ENCODE measurements at regions of chr13 and their contacts with region 1.

Region 1: DNA sequence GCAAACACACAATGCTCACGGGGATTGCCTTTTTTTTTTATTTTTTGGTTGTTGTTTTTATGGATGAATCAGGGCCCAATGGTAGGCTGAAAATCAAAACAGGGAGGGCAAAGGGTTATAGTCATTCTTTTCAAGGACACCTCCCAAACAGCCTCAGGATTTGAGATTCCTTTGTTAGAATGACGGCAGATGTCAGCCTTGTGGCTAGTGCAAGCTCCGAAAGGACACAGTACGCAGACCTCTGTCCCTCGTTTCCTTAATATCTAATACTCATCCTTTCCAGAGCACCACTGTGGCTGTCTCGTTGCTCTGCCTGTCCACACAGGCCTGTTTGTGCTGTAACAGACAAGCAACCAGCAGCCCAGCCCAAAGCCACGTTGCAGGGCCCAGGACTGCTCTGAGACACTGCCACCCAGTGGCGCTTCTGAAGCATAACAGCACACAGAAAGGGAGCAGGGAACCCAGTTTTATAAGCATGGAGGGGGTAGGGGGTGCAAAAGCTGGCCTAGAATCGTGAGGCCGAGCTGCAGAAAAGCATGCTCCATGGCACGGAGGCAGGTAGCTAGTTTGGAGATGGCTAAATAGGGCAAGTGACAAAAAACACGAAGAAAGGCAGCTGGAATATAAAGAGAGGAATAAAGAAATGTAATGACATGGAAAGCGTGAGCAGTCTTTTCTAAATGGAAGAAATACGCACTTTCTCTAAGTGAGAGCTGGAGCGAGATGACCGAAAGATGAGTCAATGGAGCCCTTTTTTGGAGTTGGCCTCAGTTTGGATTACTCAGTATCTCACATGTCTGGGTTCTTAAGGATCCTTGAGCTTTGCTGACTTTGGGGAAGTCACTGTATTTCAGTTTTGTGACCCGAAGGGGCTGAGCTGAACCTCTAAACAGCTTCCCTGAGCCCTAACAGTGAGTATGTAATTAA is 40.7 kb upstream of the MEDAG start:
- DNase-seq: peak; percentile 53 to 64 (median 62)
- ATAC-seq: peak; percentile 91
- H3K4me3 ChIP-seq: no peak overlapping the region
- H3K27ac ChIP-seq: no peak overlapping the region
- H3K4me1 ChIP-seq: no peaks in the 10 kb centered on the region; a peak in 1 of 5 replicates
- H3K27me3 ChIP-seq: peaks cover 2 to 11% of the 10 kb centered on the region in 2 experiments; a peak in 3 of 5 replicates
- CTCF ChIP-seq: peak; percentile 70 to 82 (median 74)
- EP300 ChIP-seq: no peak
- POLR2A ChIP-seq: no peak
- RAD21 ChIP-seq: peak; percentile 57 to 72

Region 2: DNA sequence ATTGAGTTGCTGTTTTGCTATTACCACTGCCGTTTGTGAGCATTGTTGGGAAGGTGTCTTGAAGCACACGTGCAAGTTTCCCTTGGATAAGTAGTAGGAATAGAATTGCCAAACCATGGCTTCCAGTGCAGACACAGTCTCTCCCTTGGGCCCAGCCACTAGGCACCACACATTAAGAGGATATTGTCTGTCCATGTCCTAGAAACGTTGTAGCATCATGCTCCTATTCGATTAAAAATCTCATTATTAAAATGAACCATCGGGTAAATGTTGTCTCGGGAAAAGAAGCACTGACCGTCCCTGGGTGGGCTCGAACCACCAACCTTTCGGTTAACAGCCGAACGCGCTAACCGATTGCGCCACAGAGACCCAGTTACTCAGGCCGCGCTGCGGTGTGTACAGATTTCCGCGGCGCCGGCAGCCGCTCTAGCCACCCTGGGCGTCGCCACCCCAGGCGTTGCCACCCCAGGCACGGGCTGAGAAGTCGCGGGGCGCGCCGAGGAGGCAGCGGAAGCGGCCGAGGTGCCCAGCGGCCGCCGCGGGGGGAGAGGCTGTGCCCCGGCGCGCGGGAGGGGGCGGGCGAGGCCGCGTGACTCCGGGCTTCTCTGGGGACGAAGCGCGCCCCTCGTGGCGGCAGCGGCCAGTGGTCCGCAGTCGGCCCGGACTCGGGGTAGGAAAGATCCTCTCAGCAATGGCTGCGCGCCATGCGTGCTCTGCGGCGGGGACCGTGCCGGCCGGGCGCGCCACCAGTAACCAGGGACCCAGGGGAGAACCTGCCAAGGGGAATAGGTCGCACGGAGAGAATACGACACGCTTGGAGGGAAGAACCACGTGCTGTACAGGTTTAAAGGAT is 191.5 kb before region 1 on chr13:
- CTCF ChIA-PET with region 1: no interaction called
- POLR2A ChIA-PET with region 1: no interaction called
- in situ Hi-C with region 1: no loop called
- intact Hi-C with region 1: loop called (anchors 10 kb)
- DNase-seq: peak; percentile 85 to 89 (median 86)
- ATAC-seq: peak; percentile 97
- H3K4me3 ChIP-seq: peak overlapping the region; percentile 57
- H3K27ac ChIP-seq: peak overlapping the region; percentile 81; the same call in 2 of the 3 replicates
- H3K4me1 ChIP-seq: peaks cover 5 to 9% of the 10 kb centered on the region in 2 experiments; a peak in 4 of 5 replicates
- H3K27me3 ChIP-seq: no peaks in the 10 kb centered on the region
- CTCF ChIP-seq: peak; percentile 53 to 77 (median 58)
- EP300 ChIP-seq: no peak
- POLR2A ChIP-seq: peak; percentile 51
- RAD21 ChIP-seq: peak; percentile 26 to 39; a peak in 3 of 4 replicates

Region 3: DNA sequence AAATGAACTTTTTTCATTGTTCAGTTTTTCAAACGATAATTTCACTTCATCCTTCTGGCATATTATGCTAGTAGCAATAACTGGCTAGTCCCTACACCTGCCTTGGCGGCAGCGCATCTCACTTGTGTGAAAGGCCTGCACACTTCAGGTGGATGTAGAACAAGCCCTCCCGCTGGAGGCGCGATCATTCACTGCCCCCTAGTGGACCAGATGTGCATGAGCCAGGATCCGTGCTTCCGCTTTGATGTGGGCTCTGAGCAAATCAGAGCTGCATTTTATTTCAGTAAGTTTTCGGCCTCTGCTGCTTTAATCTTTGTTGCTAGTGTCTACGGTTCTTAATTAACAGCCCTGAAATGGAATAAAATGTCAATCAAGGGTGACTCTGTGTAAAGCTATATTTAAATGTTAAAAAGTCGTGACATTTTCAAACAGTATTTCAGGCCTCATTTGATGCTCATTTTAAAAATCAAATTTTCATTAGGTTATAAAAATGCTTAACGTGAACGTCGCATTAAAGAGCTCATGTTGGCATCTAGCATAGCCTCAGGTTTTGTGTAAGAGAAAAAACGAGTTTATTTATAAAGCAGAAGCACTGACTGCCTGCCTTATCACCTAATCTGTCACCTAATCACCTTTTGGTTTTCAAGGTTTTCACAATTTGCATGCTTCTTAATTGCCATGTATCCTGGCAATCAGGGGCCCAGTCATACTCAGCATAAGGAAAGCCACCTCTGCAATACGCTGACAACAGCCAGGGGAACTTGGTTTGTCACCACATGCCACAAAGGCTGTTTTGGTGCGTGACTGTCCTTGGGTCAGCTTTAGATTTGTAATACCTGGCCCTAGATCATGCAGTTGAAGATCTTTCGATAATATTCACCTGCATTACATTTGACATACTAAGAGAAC is 179.2 kb after region 1 on chr13:
- CTCF ChIA-PET with region 1: no interaction called
- POLR2A ChIA-PET with region 1: no interaction called
- in situ Hi-C with region 1: no loop called
- intact Hi-C with region 1: loop called (anchors 10 kb)
- DNase-seq: peak; percentile 67 to 77 (median 76)
- ATAC-seq: peak; percentile 97
- H3K4me3 ChIP-seq: no peak overlapping the region
- H3K27ac ChIP-seq: no peak overlapping the region
- H3K4me1 ChIP-seq: peaks cover 4 to 5% of the 10 kb centered on the region in 2 experiments; a peak in 3 of 5 replicates
- H3K27me3 ChIP-seq: peaks cover 0 to 15% of the 10 kb centered on the region in 2 experiments; a peak in 3 of 5 replicates
- CTCF ChIP-seq: peak; percentile 82 to 95 (median 84)
- EP300 ChIP-seq: no peak
- POLR2A ChIP-seq: no peak
- RAD21 ChIP-seq: peak; percentile 29 to 73; a peak in 3 of 4 replicates